Activated CD4-positive, alpha-beta memory T cell treated with anti-CD3 and anti-CD28 coated beads for 36 hours (primary cell): ENCODE measurements at regions of chr1 and their contacts with region 1.

Region 1: DNA sequence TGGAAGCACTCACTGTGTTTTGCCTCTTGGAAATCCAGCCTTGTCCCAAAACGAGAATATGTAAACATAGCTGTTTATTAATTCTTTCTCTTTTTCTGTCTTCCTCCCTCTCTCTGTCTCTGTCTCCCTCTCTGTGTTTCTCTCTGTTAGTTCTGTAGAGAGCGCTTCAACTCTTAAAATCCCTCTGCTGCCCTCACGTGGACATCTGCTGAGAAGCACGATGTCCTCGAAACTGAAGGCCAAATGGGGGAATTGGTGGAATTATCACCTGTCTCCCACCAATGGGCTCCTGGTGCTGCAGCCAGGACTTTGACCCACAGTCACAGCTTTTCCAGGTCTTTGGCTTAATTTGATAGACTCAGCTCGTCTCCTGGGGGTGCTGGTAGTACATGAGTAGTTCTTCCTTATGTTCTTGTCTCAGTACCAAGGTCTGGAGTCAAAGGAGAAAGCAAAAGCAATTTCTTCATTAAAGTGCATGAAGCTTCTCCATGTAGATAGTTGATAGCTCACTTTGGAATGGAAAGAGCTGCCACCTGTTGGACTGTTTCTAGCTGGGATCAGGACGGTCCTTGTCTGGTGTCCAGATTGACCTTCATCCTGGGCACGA is 5.5 kb upstream of the GBP6 start:
- DNase-seq: peak; percentile 86
- H3K4me3 Mint-ChIP-seq: peak overlapping the region; percentile 68
- H3K27ac Mint-ChIP-seq: peak overlapping the region; percentile 72
- H3K4me1 Mint-ChIP-seq: peaks cover 41% of the 10 kb centered on the region
- H3K27me3 Mint-ChIP-seq: no peaks in the 10 kb centered on the region

Region 2: GRCh38 chr1:88998716-88999115 is 359.7 kb before region 1 on chr1:
- CTCF ChIA-PET with region 1: interaction called, 41 read pairs
- POLR2A ChIA-PET with region 1: no interaction called
- intact Hi-C with region 1: loop called (anchors 1 kb)
- DNase-seq: no peak
- H3K4me3 Mint-ChIP-seq: no peak overlapping the region
- H3K27ac Mint-ChIP-seq: no peak overlapping the region
- H3K4me1 Mint-ChIP-seq: peaks cover 27% of the 10 kb centered on the region
- H3K27me3 Mint-ChIP-seq: no peaks in the 10 kb centered on the region

Region 3: DNA sequence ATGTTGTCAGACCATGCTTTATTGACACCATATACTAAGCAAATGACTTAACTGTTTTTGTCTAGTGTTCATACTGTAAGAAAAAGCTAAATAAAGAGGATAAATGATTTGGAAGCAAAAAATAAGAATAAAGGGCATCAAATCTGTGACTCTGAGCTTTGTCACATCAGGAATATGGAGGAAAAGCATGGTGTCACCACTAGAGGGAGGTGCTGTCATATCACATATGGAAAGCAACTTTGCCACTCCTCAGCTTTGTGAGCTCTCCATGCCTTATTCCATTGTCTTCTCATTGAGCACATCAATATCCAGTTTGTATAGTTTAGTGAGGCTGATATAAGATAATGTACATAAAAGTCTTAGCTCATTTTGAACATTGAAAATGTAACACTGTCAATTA is 272.6 kb before region 1 on chr1:
- CTCF ChIA-PET with region 1: interaction called, 30 read pairs
- POLR2A ChIA-PET with region 1: no interaction called
- intact Hi-C with region 1: loop called (anchors 1 kb)
- DNase-seq: peak; percentile 43
- H3K4me3 Mint-ChIP-seq: no peak overlapping the region
- H3K27ac Mint-ChIP-seq: no peak overlapping the region
- H3K4me1 Mint-ChIP-seq: peaks cover 6% of the 10 kb centered on the region
- H3K27me3 Mint-ChIP-seq: no peaks in the 10 kb centered on the region

Region 4: GRCh38 chr1:89298461-89298860 is 59.9 kb before region 1 on chr1:
- CTCF ChIA-PET with region 1: interaction called, 7 read pairs
- POLR2A ChIA-PET with region 1: interaction called, 3 read pairs
- intact Hi-C with region 1: loop called (anchors 2 kb)
- DNase-seq: no peak
- H3K4me3 Mint-ChIP-seq: no peak overlapping the region
- H3K27ac Mint-ChIP-seq: no peak overlapping the region
- H3K4me1 Mint-ChIP-seq: peaks cover 63% of the 10 kb centered on the region
- H3K27me3 Mint-ChIP-seq: no peaks in the 10 kb centered on the region

Region 5: GRCh38 chr1:89429062-89429461 is 70.7 kb after region 1 on chr1:
- CTCF ChIA-PET with region 1: no interaction called
- POLR2A ChIA-PET with region 1: no interaction called
- intact Hi-C with region 1: loop called (anchors 1 kb)
- DNase-seq: no peak
- H3K4me3 Mint-ChIP-seq: no peak overlapping the region
- H3K27ac Mint-ChIP-seq: no peak overlapping the region
- H3K4me1 Mint-ChIP-seq: peaks cover 21% of the 10 kb centered on the region
- H3K27me3 Mint-ChIP-seq: no peaks in the 10 kb centered on the region